Dorsolateral prefrontal cortex (tissue), 120 donors: ENCODE measurements at regions of chr1 and their contacts with region 1.

Region 1: DNA sequence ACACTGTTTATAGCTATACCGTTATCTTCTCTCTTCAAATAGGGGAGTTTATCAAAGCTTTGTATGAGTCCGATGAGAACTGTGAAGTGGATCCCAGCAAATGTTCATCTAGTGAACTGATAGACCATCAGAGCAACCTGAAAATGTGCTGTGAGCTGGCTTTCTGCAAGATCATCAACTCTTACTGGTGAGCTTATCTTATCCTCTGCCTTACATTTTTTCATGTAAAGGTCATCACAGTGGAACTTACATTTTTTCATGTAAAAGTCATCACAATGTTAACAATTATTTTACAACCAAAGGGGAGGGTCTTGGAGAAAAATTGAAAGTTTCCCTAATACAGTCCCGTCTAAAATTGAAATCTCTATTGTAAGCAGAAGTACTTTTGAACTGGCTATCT is 45.2 kb downstream of the CLEC20A start:
- DNase-seq: no peak
- H3K4me3 ChIP-seq: no peak overlapping the region
- H3K27ac ChIP-seq: peak overlapping the region in 26 of 59 donors; percentile 1 to 70 (median 29)
- H3K27me3 ChIP-seq: no peaks in the 10 kb centered on the region
- CTCF ChIP-seq: no peak

Region 2: DNA sequence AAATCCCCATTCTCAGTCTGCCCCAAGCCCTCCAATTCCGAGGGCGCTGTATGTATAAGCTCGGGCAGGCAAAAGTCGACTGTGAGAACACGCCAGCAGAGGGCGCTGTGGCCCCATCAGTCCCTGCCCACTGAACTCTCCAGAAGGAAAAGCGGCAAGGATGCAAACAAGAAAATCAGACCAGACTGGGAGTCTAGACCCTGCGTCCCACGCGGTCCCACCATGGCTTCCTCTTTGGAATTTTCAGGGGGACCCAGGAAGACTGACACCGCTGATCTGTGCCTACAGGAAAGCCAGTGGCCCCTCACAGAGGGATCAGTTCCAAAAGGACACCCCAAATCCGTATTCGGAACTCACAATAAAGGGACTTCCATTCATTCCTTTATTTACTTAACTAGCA is 80.9 kb after region 1 on chr1:
- intact Hi-C with region 1: loop called in 1 of 2 experiments (anchors 5 kb)
- DNase-seq: peak; percentile 77 to 91 (median 88)
- H3K4me3 ChIP-seq: peak overlapping the region in 19 of 59 donors; percentile 5 to 42 (median 19)
- H3K27ac ChIP-seq: no peak overlapping the region
- H3K27me3 ChIP-seq: peaks cover 0 to 4% (median 0%) of the 10 kb centered on the region in 45 donors
- CTCF ChIP-seq: peak; percentile 56 to 96 (median 90)